A549 (cell line): ENCODE measurements at regions of chr19 and their contacts with region 1.

Region 1: DNA sequence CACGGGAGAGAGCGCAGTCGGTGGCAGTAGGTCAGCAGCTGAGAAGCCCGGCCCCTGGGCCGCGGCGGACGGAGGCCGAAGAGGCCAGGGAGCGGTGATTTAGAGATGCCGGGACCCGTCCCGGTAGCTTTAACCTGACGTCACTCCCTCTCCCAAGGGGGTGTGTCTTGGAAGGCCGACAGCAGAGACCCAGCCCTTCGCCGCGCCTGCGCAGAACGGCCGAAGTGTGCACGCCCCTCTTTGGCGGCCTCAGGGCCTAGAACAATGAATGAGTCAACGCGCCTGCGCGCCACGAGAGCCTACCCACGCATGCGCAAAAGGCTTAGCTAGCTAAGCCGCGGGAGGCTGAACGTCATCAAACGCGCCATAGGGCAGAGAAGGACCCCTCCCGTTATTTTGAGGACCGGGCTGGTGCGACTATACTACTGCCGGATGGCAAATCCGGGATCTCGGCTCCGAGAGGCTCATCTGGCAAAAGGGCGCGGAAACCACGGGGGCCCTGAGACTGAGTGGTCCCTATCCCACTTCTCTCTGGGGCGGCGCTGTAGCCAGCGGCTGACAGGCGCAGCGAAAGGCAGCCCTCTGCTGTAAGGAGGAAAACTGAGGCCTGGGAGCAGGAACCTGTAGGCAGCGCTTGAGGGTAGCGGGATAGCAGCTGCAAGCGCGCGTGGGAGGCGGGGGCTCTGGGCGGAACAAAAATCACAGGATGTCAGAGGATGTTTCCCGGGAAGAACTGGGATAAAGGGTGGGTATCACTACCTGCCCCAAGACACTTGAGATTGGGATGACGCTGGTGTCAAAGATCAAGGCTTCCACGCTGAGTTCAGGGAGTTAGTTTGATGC is at the starts of genes IRGQ and ZNF576:
- DNase-seq: peak; percentile 99 to 100
- ATAC-seq: peak; percentile 88 to 89
- H3K4me3 ChIP-seq: peak within 1 kb of the TSS; percentile 66
- H3K27ac ChIP-seq: peak within 1 kb of the TSS; percentile 86 to 88
- H3K4me1 ChIP-seq: peaks cover 19% of the 10 kb centered on the region
- CTCF ChIP-seq: no peak
- EP300 ChIP-seq: no peak
- POLR2A ChIP-seq: peak; percentile 78
- RAD21 ChIP-seq: peak; percentile 13 to 36; a peak in 4 of 5 replicates
- polyA plus RNA-seq, gene IRGQ: 10.0 and 14.2 TPM in 2 replicates
- polyA plus RNA-seq, gene ZNF576: 10.6 and 11.2 TPM in 2 replicates

Region 2: DNA sequence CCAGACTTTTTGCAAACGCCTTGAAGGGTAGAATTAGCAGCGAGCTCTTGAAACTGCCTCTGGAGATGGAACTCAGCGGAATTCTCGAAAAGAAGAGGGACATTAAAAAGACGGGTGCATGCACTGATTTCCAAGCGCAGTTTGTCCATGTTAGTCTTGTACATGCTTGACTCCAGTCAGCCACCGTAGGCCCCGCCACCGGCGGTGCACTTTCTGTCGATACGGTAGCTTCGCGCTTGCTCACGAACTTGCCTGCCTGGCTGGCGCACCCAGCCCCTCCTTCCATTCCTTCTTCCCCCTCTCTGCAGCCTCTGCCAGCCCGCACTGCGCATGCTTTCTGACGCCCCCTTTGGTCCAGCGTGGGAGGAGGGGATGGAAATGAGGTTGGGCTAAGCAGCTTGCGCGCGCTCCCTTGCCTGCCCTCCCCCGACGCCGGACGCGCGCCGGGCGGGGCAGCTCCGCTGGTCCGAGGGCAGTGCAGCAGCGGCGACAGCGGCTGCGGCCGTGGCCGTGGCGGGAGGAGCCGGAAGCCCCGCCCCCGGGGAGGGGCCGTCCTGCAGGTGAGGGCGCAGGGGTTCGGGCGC is 63.2 kb before region 1 on chr19 and contains the start of gene ZNF575:
- CTCF ChIA-PET with region 1: interaction called, 51 read pairs
- POLR2A ChIA-PET with region 1: interaction called, 21 read pairs
- DNase-seq: peak; percentile 95 to 99
- ATAC-seq: peak; percentile 70 to 83
- H3K4me3 ChIP-seq: peak within 1 kb of the TSS; percentile 57
- H3K27ac ChIP-seq: peak within 1 kb of the TSS; percentile 90 to 93
- H3K4me1 ChIP-seq: peaks cover 14% of the 10 kb centered on the region
- CTCF ChIP-seq: no peak
- EP300 ChIP-seq: no peak
- POLR2A ChIP-seq: peak; percentile 79
- RAD21 ChIP-seq: no peak
- polyA plus RNA-seq, gene ZNF575: 0.09 and 0.38 TPM in 2 replicates

Region 3: GRCh38 chr19:43575156-43575950 is 20.9 kb before region 1 on chr19 and contains the starts of genes PINLYP and XRCC1:
- CTCF ChIA-PET with region 1: interaction called, 21 read pairs
- POLR2A ChIA-PET with region 1: interaction called, 17 read pairs
- DNase-seq: peak; percentile 99 to 100
- ATAC-seq: peak; percentile 98 to 99
- H3K4me3 ChIP-seq: peak within 1 kb of the TSS; percentile 84
- H3K27ac ChIP-seq: peak within 1 kb of the TSS; percentile 91
- H3K4me1 ChIP-seq: peaks cover 11% of the 10 kb centered on the region
- CTCF ChIP-seq: no peak
- EP300 ChIP-seq: no peak
- POLR2A ChIP-seq: peak; percentile 52
- RAD21 ChIP-seq: no peak
- polyA plus RNA-seq, gene PINLYP: 0.12 TPM in 1 of 2 replicates, not detected in the other
- polyA plus RNA-seq, gene XRCC1: 31.9 and 32.0 TPM in 2 replicates

Region 4: DNA sequence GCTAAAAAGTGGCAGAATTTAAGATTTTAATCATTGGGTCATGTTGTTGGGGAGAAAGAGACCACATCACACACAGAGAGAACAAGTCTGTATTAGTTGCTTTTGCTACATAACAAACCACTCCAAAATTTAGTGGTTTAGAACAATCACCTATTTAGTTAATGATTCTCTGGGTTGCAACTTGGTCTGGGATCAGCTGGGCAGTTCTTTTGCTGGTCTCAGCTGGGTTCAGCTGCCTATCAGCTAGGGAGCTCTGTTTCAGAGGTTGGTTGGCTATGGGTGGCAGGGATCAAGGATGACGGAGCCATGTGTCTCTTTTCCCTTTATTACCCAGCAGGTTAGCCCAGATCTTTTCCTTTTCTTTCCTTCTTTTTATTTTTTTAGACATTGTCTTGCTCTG is 11.7 kb before region 1 on chr19:
- CTCF ChIA-PET with region 1: interaction called, 15 read pairs
- POLR2A ChIA-PET with region 1: interaction called, 3 read pairs
- DNase-seq: no peak
- ATAC-seq: no peak
- H3K4me3 ChIP-seq: no peak overlapping the region
- H3K27ac ChIP-seq: no peak overlapping the region
- H3K4me1 ChIP-seq: no peaks in the 10 kb centered on the region
- CTCF ChIP-seq: no peak
- EP300 ChIP-seq: no peak
- POLR2A ChIP-seq: no peak
- RAD21 ChIP-seq: no peak

Region 5: GRCh38 chr19:43606569-43607229 is 10.5 kb after region 1 on chr19:
- CTCF ChIA-PET with region 1: interaction called, 15 read pairs
- POLR2A ChIA-PET with region 1: interaction called, 4 read pairs
- DNase-seq: no peak
- ATAC-seq: no peak
- H3K4me3 ChIP-seq: no peak overlapping the region
- H3K27ac ChIP-seq: no peak overlapping the region
- H3K4me1 ChIP-seq: peaks cover 6% of the 10 kb centered on the region; the same call in 2 of the 3 replicates
- CTCF ChIP-seq: no peak
- EP300 ChIP-seq: no peak
- POLR2A ChIP-seq: no peak
- RAD21 ChIP-seq: no peak

Region 6: DNA sequence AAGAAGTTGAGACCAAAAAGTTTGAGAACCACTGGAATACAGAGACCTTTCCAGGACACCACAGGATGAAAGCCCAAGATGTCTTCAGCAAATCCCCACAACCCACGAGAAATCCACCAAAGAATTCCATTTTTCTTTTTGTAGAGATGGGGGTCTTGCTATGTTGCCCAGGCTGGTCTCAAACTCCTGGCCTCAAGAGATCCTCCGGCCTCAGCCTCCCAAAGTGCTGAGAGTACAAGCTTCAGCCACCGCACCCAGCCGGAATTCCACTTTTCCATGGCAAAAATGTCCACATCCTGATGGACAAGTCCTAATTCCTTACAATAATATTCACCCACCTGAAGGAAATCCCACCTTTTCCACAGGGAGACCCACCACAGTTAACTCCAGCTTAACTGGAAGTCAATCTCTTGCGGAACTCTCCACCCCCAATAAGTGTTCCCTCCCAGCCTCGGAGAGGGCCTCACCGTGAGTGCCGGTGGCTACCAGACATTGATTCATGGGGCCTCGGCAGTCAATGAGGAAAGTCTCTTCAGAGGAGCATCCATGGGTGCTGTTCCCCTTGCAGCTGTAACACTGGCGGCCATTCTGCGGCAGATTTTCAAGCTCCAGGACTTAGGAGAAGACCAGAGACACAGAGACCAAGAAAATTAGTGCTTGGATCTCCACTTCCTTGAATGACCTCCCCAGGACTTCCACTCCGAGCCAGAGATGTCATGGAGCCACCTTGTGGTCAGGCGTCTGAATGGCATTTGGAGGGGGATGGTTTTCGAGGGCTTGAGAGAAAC is 55.7 kb after region 1 on chr19:
- CTCF ChIA-PET with region 1: interaction called, 14 read pairs
- POLR2A ChIA-PET with region 1: no interaction called
- DNase-seq: peak; percentile 80 to 84
- ATAC-seq: peak; percentile 82 to 91
- H3K4me3 ChIP-seq: no peak overlapping the region
- H3K27ac ChIP-seq: no peak overlapping the region
- H3K4me1 ChIP-seq: no peaks in the 10 kb centered on the region
- CTCF ChIP-seq: peak; percentile 78
- EP300 ChIP-seq: no peak
- POLR2A ChIP-seq: no peak
- RAD21 ChIP-seq: peak; percentile 73 to 81